ENCODE measurements at regions of chr15 and their contacts with region 1.

Region 1: DNA sequence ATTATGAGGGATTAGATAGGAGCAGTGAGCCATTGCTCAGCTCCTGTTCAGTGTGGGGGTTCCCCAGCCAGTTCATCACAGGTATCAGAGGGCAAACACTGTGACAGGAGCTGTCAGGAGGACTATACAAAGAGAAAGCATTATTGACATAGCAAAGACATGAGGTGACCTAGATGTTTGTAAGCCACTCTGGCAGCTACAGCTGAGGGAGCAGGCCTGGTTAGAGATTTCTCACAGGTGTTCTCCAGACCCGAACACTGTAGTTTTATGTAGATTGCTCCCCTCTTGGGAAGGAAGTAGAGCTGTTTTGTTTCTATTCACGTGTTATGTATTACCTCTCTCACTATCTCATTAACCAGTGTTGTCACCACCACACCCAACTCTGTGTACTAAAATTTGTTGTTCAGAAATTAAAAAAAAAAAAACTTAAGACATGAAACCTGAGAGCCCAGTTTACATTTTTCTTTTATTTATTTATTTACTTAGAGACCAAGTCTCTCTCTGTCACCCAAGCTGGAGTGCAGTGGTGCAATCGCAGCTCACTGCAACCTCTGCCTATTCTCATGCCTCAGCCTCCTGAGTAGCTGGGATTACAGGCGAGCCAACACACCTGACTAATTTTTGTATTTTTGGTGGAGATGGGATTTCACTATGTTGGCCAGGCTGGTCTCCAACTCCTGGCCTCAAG is 123.7 kb downstream of the RBPMS2 start:
- DNase-seq: no peak
- H3K4me3 ChIP-seq: no peak overlapping the region
- CTCF ChIP-seq: no peak

Region 2: GRCh38 chr15:64430000-64430735 is 221.5 kb before region 1 on chr15:
- CTCF ChIA-PET with region 1: interaction called, 63 read pairs
- POLR2A ChIA-PET with region 1: no interaction called
- DNase-seq: peak; percentile 60
- H3K4me3 ChIP-seq: no peak overlapping the region
- CTCF ChIP-seq: no peak

Region 3: DNA sequence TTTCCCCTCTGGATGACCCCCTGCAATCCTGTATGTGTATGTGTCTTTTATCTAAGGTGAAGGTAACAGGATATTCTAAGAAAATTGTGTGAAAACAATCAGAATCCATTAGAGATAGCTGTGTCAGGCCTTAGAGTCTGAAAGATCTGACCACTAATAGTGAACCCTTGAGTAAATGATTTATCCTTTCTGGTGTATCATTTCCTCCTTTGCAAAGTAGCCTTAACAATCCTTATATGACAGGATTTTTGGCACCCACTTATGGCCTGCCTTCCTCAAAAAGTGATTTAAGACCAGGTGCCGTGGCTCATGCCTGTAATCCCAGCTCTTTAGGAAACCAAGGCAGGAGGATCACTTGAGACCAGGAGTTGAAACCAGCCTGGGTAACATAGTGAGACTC is 13.5 kb after region 1 on chr15:
- CTCF ChIA-PET with region 1: interaction called, 12 read pairs
- POLR2A ChIA-PET with region 1: no interaction called
- DNase-seq: no peak
- H3K4me3 ChIP-seq: no peak overlapping the region
- CTCF ChIP-seq: no peak

Region 4: GRCh38 chr15:64950888-64951287 is 299.2 kb after region 1 on chr15:
- CTCF ChIA-PET with region 1: no interaction called
- POLR2A ChIA-PET with region 1: no interaction called
- DNase-seq: no peak
- H3K4me3 ChIP-seq: no peak overlapping the region
- CTCF ChIP-seq: no peak